GM10248 (cell line): ENCODE measurements at regions of chr17 and their contacts with region 1.

Region 1: DNA sequence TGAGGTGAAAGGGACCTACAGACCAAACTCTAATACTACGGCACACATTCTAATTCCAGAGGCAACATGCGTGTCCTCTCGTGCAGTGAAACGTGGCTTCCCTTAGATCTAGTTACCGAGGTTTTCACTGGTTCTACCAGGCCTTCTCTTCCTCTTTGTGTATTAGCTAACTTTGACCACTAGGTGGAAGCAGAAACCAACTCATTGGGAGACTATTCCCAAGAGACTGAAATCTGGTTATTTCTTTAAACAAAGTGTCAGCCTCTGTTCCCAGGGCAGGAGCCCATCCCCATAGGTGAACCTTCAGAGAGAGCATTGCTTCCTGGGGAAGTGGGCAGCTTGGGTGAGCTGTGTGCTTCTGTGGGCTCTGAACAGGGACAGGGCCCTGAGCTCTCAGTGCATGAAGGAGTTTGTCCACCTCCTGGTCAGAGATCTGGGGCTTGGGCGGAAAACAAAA is 19.7 kb upstream of the RCVRN start:
- DNase-seq: peak; percentile 76
- CTCF ChIP-seq: peak; percentile 66

Region 2: DNA sequence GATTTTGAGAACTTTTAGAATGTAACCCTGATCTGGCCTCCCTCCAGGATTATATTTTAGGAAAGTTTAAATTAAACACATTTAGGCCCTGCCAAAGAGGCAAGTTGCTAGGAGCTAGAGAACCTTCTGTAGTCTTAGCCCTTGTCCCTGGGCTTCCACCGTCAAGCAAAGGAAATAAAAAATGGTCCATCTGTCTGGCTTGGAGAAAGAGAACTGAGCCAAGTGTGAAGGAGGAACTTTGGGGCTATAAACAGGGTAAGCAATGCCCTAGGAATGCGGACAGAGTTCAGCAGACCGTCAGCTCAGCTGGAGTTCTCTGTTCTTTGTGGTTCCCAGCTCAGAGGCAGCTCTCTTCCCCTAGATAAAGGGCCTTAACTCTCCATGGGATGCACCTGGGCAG is 49.3 kb before region 1 on chr17:
- CTCF ChIA-PET with region 1: no interaction called
- POLR2A ChIA-PET with region 1: no interaction called
- DNase-seq: no peak
- CTCF ChIP-seq: no peak

Region 3: GRCh38 chr17:9935408-9935807 is 10.6 kb after region 1 on chr17:
- CTCF ChIA-PET with region 1: interaction called, 23 read pairs
- POLR2A ChIA-PET with region 1: no interaction called
- DNase-seq: no peak
- CTCF ChIP-seq: no peak

Region 4: DNA sequence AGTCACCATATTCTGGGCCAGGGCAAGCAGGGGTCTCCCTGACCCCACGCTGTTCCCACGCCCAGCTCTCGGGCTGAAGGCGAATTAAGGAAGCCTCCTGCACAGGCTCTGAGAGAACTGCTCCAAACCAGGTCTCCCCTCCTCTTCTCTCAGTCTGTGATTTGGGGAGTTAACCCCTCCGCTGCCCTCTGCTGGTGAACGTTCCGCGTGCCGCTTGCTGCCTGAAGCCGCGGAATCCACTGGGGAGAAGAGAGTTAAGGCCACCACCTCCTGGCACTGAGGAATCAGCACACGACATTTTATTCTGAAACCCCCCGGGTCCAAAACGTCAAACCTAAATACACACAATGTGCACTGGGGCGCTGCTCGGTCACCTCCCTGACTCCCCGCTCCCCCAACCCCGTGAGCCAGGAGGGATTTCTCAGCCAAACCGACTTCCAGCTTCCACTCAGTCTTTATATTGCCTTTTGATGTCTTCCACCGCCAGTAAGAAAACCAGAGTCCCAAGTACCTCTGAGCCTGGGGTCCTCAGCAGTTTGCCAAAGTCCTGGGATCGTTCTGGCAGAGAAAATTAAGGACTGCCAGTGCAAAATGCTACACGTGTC is 34.7 kb after region 1 on chr17:
- CTCF ChIA-PET with region 1: interaction called, 21 read pairs
- POLR2A ChIA-PET with region 1: no interaction called
- DNase-seq: peak; percentile 78
- CTCF ChIP-seq: peak; percentile 71

Region 5: DNA sequence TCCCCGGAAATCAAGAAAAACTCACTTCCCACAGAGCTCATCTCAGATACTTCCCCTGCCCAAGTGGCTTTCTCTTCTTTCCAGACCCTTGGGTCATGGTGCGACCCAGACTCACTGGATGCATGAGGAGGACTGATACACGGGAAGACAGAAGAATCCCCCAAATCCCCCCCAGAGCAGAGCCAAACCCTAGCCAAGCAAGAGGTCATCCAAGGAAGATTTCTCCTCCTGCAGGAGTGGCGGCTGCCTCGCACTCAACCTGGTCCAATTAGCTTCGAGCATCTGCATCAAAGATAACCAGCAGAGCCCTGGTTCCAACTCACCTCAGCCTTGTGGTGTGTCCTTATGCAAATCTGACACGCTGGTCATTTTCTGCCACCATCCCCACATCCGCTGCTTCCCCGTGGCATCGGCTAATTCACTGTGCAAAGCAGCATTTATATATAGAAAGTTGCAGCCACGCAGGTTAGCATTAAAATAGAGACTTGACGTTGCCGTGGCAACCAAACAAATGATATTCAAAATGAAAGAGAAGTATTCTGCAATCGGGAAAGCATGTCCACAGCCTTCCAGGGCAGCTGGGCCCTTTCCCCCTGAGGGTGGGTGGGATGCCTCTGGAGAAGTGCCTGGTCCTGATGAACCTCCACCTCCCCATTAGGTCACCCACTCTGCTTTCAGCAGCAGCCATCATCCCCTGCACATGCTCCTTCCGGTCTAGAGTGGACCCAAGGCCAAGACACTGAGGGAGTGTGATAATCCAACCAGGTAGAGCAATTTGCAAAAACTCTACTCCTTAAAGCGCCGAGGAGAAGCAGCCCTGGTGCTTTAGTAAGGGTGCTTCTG is 134.8 kb after region 1 on chr17:
- CTCF ChIA-PET with region 1: no interaction called
- POLR2A ChIA-PET with region 1: no interaction called
- DNase-seq: peak; percentile 77
- CTCF ChIP-seq: no peak